ENCODE measurements at regions of chr11 and their contacts with region 1.

Region 1: DNA sequence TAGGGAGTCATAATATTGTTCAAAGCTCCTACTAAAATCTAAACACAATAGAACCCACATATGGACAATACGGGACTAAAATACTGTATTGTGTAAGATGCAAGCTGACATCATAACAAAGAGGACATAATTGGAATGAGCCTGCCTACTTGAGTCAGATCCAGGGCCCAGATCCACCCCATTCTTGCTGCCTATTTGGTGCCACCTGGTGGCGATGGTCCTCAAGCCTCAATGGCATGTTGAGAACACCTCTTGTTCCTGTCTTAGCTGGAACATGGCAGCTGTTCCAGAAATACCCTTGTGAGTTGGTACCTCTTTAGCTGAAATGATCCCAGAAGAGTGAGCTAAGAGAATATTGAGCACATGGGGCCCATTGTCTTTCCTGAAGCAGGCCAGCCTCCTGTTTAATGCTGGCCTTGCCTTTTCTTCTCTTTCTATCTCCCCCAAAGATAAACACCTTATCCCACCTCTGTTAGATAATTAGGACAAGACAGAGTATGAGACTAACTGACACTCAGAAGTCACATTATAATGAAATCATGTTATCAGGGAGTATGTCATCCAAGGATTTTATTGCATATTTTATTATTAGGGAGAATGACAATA is 680.9 kb upstream of the ANO5 start:
- DNase-seq: peak; percentile 21
- CTCF ChIP-seq: peak; percentile 59

Region 2: GRCh38 chr11:20563866-20564265 is 948.1 kb before region 1 on chr11:
- in situ Hi-C with region 1: no loop called
- DNase-seq: no peak
- CTCF ChIP-seq: no peak

Region 3: GRCh38 chr11:20647976-20648565 is 863.9 kb before region 1 on chr11:
- in situ Hi-C with region 1: loop called (anchors 25 kb)
- DNase-seq: peak; percentile 69
- CTCF ChIP-seq: peak; percentile 83

Region 4: GRCh38 chr11:21646351-21646750 is 134.4 kb after region 1 on chr11:
- in situ Hi-C with region 1: no loop called
- DNase-seq: no peak
- CTCF ChIP-seq: no peak